ENCODE measurements at regions of chr11 and their contacts with region 1.

Region 1: DNA sequence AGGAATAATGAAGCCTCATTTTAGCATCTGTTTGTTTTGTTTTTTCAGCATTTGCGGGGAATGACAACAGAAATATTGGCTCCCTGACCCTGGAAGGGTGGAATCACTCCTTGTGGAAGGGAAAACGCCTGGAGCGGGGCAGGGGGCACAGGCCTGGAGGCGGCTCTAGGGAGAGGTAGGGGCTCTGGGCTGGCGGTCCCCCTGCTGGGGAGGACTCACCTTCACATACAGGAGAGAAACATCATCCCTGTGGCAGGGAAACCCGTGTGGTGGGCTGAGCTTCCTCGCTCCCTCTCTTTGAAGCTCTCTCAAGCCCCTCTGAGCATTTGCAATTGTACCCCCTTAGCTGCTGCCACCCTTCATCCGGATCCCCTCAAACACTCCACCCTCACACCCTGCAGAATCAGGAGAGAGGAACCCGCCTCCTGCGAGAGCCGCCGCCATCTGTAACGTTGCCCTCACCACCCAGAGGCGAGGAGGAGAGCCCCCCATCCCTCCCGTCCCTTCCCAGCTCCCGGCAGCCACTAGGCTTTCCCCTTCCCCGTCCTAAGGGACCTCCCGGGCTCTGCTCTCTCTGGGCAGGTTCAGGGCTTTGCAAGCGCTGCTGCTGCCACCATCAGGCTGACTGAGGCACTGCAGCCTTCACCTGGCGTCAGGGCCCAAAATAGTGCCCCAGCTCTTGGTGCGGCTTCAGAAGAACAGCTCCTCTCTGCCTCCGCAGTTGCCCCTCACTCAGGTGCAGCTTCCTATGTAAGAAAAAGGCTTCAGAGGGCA is 10.4 kb downstream of the KIRREL3 start:
- DNase-seq: peak; percentile 85 to 96
- H3K4me3 ChIP-seq: 0 out of 8 replicates have a peak overlapping the region, but pooled peaks of 1 of the 4 experiments have one; percentile 34
- H3K27ac ChIP-seq: no peak overlapping the region
- H3K4me1 ChIP-seq: peaks cover 0 to 3% (median 1%) of the 10 kb centered on the region in 4 experiments; a peak in 1 of 7 replicates
- H3K27me3 ChIP-seq: peaks cover 0 to 6% (median 2%) of the 10 kb centered on the region in 4 experiments; a peak in 1 of 7 replicates
- CTCF ChIP-seq: peak; percentile 93 to 99 (median 97)
- EP300 ChIP-seq: no peak
- POLR2A ChIP-seq: no peak
- RAD21 ChIP-seq: peak; percentile 97

Region 2: DNA sequence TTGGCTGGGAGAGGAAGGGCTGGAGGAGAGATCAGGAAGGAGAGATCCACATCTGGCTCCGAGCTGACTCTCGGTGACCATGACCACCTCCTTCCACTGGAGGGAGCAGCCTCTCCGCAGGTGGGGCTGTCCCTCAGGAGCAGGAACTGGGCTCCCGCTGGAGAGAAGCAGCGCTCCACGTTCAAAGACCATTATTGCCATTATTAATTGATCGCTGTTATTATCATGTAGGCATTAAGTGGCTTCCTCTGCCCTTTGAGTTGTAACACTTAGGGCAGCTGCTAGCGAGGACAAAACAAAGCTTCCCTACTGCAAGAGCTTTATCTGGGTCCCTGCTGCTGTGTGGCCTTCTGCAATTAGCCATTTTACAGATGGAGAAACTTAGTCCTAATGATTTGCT is 382.8 kb before region 1 on chr11:
- CTCF ChIA-PET with region 1: interaction called, 42 read pairs
- POLR2A ChIA-PET with region 1: no interaction called
- DNase-seq: peak; percentile 61 to 78
- H3K4me3 ChIP-seq: peak overlapping the region in 1 of 4 experiments; percentile 39; a peak in 2 of 8 replicates
- H3K27ac ChIP-seq: no peak overlapping the region
- H3K4me1 ChIP-seq: peaks cover 8 to 15% (median 11%) of the 10 kb centered on the region in 4 experiments
- H3K27me3 ChIP-seq: no peaks in the 10 kb centered on the region; a peak in 3 of 7 replicates
- CTCF ChIP-seq: peak; percentile 92 to 96 (median 95)
- EP300 ChIP-seq: no peak
- POLR2A ChIP-seq: no peak
- RAD21 ChIP-seq: peak; percentile 96 to 97

Region 3: DNA sequence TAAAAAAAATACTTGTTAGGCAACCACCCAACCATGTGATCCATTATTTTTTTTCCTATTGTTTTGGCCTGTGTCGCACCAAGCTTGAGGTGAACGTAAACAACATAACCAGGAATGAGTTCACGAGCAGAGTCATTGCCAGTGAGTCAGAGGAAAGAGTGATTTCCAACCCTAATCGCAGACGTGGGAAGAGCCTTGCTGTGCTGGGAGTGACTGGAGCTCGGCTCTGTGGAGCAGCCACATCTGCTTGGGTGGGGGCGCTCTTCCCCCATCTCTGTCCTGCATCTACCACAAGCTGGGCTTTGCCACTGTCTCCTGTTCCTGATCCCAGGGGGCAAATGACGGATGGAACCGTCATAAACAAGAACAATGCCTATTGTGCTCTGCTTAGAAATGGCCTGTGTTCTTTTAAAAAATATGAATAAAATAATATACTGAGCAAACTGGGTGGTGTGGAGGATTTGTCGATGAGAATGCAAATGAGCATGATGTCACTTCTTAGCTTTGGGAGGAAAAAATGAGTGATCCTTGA is 199.5 kb before region 1 on chr11:
- CTCF ChIA-PET with region 1: interaction called, 17 read pairs
- POLR2A ChIA-PET with region 1: interaction called, 4 read pairs
- DNase-seq: peak in 1 of 2 experiments; percentile 44
- H3K4me3 ChIP-seq: no peak overlapping the region
- H3K27ac ChIP-seq: no peak overlapping the region
- H3K4me1 ChIP-seq: no peaks in the 10 kb centered on the region; a peak in 3 of 7 replicates
- H3K27me3 ChIP-seq: no peaks in the 10 kb centered on the region
- CTCF ChIP-seq: peak; percentile 17 to 47 (median 38); a peak in 3 of 4 replicates
- EP300 ChIP-seq: no peak
- POLR2A ChIP-seq: no peak
- RAD21 ChIP-seq: peak; percentile 48 to 53

Region 4: GRCh38 chr11:126891556-126892217 is 98.4 kb before region 1 on chr11:
- CTCF ChIA-PET with region 1: interaction called, 11 read pairs
- POLR2A ChIA-PET with region 1: no interaction called
- DNase-seq: no peak
- H3K4me3 ChIP-seq: no peak overlapping the region
- H3K27ac ChIP-seq: no peak overlapping the region
- H3K4me1 ChIP-seq: peaks cover 4 to 12% (median 9%) of the 10 kb centered on the region in 4 experiments; a peak in 6 of 7 replicates
- H3K27me3 ChIP-seq: no peaks in the 10 kb centered on the region
- CTCF ChIP-seq: no peak
- EP300 ChIP-seq: no peak
- POLR2A ChIP-seq: no peak
- RAD21 ChIP-seq: no peak

Region 5: GRCh38 chr11:126969865-126970479 is 20.2 kb before region 1 on chr11:
- CTCF ChIA-PET with region 1: interaction called, 94 read pairs
- POLR2A ChIA-PET with region 1: no interaction called
- DNase-seq: no peak
- H3K4me3 ChIP-seq: no peak overlapping the region
- H3K27ac ChIP-seq: no peak overlapping the region
- H3K4me1 ChIP-seq: peaks cover 3 to 7% (median 4%) of the 10 kb centered on the region in 4 experiments; a peak in 5 of 7 replicates
- H3K27me3 ChIP-seq: no peaks in the 10 kb centered on the region
- CTCF ChIP-seq: peak; percentile 55 to 66 (median 58)
- EP300 ChIP-seq: no peak
- POLR2A ChIP-seq: no peak
- RAD21 ChIP-seq: peak; percentile 58 to 61

Region 6: DNA sequence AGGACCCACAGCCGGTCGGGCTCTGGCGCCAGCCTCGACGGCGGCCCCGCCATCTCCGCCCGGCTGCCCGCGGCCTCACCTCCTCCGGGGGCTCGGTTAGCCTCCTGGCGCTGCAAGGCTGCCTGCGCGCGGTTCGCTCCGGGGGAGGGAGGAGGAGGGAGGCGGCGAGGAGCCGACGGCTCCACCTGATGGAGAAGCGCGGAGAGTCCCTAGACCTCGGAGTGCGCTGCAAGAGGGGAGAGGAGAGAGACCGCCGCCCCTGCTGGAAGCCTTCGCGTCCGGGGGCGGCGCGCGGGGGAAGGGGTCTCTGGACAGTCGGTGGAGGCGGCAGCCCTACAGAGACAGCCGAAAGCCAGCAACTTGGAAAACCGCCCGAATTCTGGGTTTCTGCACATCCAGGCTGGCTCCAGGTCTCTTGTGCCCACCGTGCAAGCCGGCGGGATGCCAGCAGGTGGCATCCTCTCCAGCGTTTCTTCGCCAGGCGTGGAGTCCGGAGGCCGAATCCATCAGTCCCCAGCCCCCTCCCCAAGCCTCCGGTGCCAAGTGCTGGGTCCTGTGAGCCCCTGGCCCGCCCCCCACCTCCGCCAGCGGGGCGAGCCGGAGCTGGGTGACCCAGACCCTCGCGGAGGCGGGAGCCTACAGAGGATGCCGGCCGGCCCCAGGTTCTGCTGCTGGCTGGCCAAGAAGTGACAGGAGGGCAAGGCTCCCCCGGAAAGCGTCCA is 13.3 kb after region 1 on chr11:
- CTCF ChIA-PET with region 1: interaction called, 55 read pairs
- POLR2A ChIA-PET with region 1: no interaction called
- DNase-seq: peak in 1 of 2 experiments; percentile 84
- H3K4me3 ChIP-seq: peak overlapping the region; percentile 46 to 74 (median 62)
- H3K27ac ChIP-seq: no peak overlapping the region
- H3K4me1 ChIP-seq: peaks cover 3 to 11% (median 8%) of the 10 kb centered on the region in 4 experiments; a peak in 6 of 7 replicates
- H3K27me3 ChIP-seq: peaks cover 32 to 60% (median 49%) of the 10 kb centered on the region in 4 experiments
- CTCF ChIP-seq: peak; percentile 51 to 67 (median 51)
- EP300 ChIP-seq: no peak
- POLR2A ChIP-seq: no peak
- RAD21 ChIP-seq: peak in 1 of 2 experiments; percentile 57; a peak in 2 of 4 replicates